B cell (primary cell): ENCODE measurements at regions of chr4 and their contacts with region 1.

Region 1: DNA sequence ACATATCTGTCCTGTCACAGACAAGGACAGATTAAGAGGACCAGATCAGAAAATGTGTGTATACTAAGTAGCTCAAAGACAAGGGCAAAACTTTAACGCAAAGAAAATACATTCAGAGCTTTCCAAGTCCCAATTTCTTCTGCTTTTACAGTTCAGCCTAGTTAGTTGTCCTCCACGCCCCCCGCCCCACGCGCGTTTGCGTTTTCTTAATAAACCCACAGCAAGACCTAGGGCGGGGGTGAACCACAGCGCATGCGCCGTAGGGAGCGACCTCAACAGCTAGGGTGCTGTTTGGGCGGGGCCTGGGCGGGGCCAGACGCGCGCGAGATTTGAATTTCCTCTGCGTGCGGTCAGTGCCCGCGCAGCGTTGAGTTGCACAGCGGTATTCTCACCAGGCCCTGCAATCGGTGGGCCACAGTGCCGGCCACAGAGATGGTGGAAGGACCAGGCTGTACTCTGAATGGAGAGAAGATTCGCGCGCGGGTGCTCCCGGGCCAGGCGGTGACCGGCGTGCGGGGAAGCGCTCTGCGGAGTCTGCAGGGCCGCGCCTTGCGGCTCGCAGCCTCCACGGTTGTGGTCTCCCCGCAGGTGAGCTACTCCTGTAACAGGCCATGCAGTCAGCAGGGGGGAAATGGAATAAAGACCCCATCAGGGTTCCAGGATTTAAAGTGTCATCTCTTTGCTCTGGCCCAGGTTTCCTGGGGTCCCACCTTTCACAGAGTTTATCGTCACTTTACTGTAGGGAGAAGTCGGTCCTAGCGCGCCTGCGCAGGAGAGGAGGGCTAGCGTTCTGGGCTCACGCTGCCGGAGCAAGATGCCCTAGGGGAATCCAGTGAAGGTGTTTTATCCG is at the start of gene NEIL3:
- DNase-seq: peak; percentile 90
- ATAC-seq: peak; percentile 94
- H3K4me3 ChIP-seq: peak within 1 kb of the TSS; percentile 55 to 79 (median 67)
- H3K4me3 Mint-ChIP-seq: peak within 1 kb of the TSS; percentile 94
- H3K27ac ChIP-seq: no peak within 1 kb of the TSS
- H3K27ac Mint-ChIP-seq: peak within 1 kb of the TSS; percentile 62
- H3K4me1 ChIP-seq: peaks cover 5 to 9% of the 10 kb centered on the region in 2 donors
- H3K4me1 Mint-ChIP-seq: peaks cover 13% of the 10 kb centered on the region
- H3K27me3 ChIP-seq: no peaks in the 10 kb centered on the region
- H3K27me3 Mint-ChIP-seq: no peaks in the 10 kb centered on the region
- CTCF ChIP-seq: no peak
- total RNA-seq, gene NEIL3: 0.15 TPM in 1 of 2 replicates, not detected in the other

Region 2: DNA sequence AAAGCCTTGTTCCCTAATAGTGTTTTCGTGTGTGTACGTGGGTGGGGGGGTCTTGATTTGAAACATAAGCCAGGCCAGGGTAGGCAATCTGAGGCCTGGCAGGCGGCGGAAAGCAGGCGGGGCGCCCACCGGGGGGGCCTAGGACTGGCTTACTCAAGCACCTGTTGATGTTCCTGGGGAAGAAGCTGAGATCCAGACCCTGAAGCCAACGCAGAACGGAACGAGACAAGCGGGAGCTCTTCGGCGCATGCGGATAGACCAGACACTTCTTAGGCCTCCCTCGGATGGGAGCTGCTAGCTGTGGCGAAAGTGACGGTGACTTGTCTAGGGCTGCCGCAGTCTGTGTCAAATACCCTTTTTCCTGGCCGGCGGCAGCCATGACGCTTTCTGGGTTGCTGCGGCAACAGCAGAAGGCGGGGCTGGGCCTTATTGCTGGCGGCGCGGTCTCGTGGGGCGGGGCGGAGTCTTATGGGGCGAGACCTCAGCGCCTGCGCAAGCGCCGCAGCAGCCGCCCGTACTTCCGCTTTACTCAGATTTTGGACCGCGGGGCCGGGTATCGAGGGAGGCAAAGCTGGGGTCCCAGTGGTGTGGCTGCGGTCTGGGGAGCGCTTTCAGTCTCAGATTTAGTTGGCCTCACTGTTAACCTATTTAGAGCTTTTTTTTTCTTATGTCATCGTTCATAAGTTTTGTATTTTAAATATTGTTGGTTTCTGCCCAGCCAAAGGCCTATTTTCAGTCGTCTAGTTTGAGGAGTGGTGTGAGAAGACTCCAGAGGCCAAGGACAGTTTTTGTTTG is 1114.4 kb before region 1 on chr4 and contains the start of gene SPATA4:
- CTCF ChIA-PET with region 1: no interaction called
- POLR2A ChIA-PET with region 1: no interaction called
- intact Hi-C with region 1: loop called (anchors 2 kb)
- DNase-seq: peak; percentile 96
- ATAC-seq: peak; percentile 98
- H3K4me3 ChIP-seq: peak within 1 kb of the TSS; percentile 53 to 77 (median 63)
- H3K4me3 Mint-ChIP-seq: peak within 1 kb of the TSS; percentile 94
- H3K27ac ChIP-seq: peak within 1 kb of the TSS; percentile 65 to 73
- H3K27ac Mint-ChIP-seq: peak within 1 kb of the TSS; percentile 87
- H3K4me1 ChIP-seq: peaks cover 9 to 10% of the 10 kb centered on the region in 2 donors
- H3K4me1 Mint-ChIP-seq: peaks cover 9% of the 10 kb centered on the region
- H3K27me3 ChIP-seq: peaks cover 0 to 22% (median 14%) of the 10 kb centered on the region in 4 experiments
- H3K27me3 Mint-ChIP-seq: peaks cover 44% of the 10 kb centered on the region
- CTCF ChIP-seq: no peak
- total RNA-seq, gene SPATA4: not detected in 2 replicates

Region 3: DNA sequence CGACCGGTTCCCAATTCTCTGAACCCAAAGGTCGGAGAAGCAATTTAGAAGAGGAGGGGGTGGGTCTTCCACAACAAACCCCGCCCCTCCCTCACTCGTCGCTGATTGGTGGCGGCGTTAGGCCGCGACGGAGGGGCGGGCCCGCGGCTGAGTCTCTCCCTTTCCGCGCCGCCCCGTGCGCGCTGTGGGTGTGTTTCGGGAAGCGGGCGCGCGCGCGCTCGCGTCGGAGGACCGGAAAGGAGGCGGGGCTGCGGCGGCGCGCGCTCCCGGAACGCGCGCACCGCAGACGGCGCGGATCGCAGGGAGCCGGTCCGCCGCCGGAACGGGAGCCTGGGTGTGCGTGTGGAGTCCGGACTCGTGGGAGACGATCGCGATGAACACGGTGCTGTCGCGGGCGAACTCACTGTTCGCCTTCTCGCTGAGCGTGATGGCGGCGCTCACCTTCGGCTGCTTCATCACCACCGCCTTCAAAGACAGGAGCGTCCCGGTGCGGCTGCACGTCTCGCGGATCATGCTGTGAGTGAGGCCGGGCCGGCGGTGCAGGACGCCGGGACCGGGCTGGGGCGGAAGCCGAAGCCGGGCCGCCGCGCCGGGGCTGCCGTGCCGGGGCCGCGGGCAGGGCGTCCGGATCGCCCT is 989.9 kb before region 1 on chr4 and contains the start of gene SPCS3:
- CTCF ChIA-PET with region 1: no interaction called
- POLR2A ChIA-PET with region 1: no interaction called
- intact Hi-C with region 1: loop called (anchors 2 kb)
- DNase-seq: peak; percentile 97
- ATAC-seq: peak; percentile 91
- H3K4me3 ChIP-seq: peak within 1 kb of the TSS; percentile 77 to 91 (median 84)
- H3K4me3 Mint-ChIP-seq: peak within 1 kb of the TSS; percentile 93
- H3K27ac ChIP-seq: peak within 1 kb of the TSS; percentile 84 to 95
- H3K27ac Mint-ChIP-seq: peak within 1 kb of the TSS; percentile 97
- H3K4me1 ChIP-seq: peaks cover 21 to 44% of the 10 kb centered on the region in 2 donors
- H3K4me1 Mint-ChIP-seq: peaks cover 43% of the 10 kb centered on the region
- H3K27me3 ChIP-seq: no peaks in the 10 kb centered on the region
- H3K27me3 Mint-ChIP-seq: no peaks in the 10 kb centered on the region
- CTCF ChIP-seq: no peak
- total RNA-seq, gene SPCS3: 92.4 and 102 TPM in 2 replicates

Region 4: DNA sequence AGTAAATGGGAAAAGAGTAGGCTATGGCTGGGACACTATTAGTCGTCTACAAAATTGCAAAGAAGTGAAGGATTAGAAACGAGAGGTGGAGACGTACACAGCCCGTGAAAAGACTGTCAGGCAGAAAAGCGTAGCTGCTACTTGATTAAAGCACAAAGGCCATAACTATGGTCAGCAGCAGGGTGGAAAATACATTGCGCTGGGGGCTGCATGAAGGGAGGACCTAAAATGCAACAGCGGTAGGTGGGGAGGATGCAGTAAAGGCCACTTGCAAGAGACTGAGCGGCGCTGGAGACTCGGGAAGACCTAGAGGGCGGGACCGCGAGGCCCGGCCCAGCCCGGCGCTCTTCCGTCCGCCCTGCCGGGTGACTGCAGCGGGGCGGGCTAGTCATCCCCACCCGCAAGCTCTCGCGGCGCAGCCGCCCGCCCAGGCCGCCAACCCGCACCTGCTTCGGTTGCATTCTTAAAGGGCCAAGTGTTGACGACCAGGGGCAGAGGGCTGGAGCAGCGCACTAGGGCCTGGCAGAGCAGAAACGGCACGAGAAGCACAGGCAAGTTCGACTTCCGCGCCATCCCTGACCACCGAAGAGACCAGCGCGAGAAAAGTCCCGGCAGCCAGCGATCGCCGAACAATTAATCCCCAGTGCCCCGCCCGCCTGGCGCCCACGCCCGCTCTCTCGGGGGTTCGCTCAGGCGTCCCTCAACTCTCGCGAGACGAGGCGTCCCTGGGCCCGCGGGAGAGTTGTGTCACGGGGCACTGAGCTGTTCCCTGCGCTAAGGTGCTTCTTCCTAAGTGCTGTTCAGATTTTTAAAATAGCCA is 132.3 kb after region 1 on chr4 and contains the start of gene AGA:
- CTCF ChIA-PET with region 1: no interaction called
- POLR2A ChIA-PET with region 1: interaction called, 3 read pairs
- intact Hi-C with region 1: loop called (anchors 1 kb)
- DNase-seq: peak; percentile 96
- ATAC-seq: peak; percentile 88
- H3K4me3 ChIP-seq: peak within 1 kb of the TSS; percentile 62 to 96 (median 88)
- H3K4me3 Mint-ChIP-seq: peak within 1 kb of the TSS; percentile 94
- H3K27ac ChIP-seq: peak within 1 kb of the TSS; percentile 81 to 91
- H3K27ac Mint-ChIP-seq: peak within 1 kb of the TSS; percentile 94
- H3K4me1 ChIP-seq: peaks cover 16 to 17% of the 10 kb centered on the region in 2 donors
- H3K4me1 Mint-ChIP-seq: peaks cover 24% of the 10 kb centered on the region
- H3K27me3 ChIP-seq: no peaks in the 10 kb centered on the region
- H3K27me3 Mint-ChIP-seq: no peaks in the 10 kb centered on the region
- CTCF ChIP-seq: no peak
- total RNA-seq, gene AGA: 28.2 and 28.9 TPM in 2 replicates